Ascending aorta (tissue), 2 donors: ENCODE measurements at regions of chr1 and their contacts with region 1.

Region 1: GRCh38 chr1:32266921-32267591 is 16.0 kb downstream of the LCK start:
- DNase-seq: no peak
- H3K4me3 ChIP-seq: no peak overlapping the region
- H3K27ac ChIP-seq: no peak overlapping the region
- H3K4me1 ChIP-seq: peaks cover 0 to 2% of the 10 kb centered on the region in 2 donors
- H3K27me3 ChIP-seq: no peaks in the 10 kb centered on the region
- CTCF ChIP-seq: no peak

Region 2: DNA sequence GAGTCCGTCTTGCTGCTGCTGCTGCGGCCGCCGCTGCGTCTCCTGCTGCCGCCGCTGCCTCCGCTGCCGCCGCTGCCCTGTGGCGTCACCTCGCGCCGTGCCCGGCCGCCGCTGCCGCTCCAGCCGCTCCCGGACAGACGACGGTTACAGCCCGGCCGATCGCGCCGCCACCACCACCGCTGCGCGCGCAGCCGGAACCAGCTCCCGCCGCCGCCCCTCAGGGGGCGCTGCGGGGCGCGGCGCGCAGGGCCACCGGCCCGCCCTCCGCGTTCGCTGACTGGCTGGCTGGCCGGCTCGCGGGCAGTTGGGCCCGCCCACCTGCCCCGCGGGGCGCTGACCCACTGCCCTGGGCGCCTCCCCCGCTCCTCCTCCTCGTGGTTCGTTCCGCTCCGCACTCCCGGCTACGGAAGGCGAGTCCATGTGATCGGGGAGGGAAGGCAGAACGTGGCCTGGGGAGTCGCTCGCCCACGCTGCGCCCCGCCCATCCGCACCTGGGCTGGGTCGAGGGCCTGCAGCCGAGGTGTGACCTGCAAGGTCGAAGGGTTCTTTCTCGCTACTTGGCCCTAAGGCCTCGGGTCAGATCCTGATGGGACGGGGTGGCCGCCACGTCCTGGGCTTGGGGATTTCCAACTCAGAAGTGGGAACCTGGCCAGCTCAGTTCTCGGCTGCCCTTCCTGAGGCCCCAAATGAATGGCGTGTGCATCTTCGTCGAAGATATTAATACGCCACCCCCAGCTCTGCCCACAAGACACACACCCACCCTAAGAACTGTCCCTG is 328.7 kb before region 1 on chr1 and contains the start of gene PTP4A2:
- intact Hi-C with region 1: no loop called
- DNase-seq: peak; percentile 77 to 95
- H3K4me3 ChIP-seq: peak within 1 kb of the TSS; percentile 70 to 85
- H3K27ac ChIP-seq: peak within 1 kb of the TSS; percentile 94 to 97
- H3K4me1 ChIP-seq: peaks cover 12 to 26% of the 10 kb centered on the region in 2 donors
- H3K27me3 ChIP-seq: no peaks in the 10 kb centered on the region
- CTCF ChIP-seq: peak in 1 of 3 experiments; percentile 98
- total RNA-seq, gene PTP4A2: 174 TPM

Region 3: GRCh38 chr1:32221980-32222755 is 44.9 kb before region 1 on chr1 and contains the starts of genes EIF3I and TMEM234:
- intact Hi-C with region 1: loop called (anchors 1 kb)
- DNase-seq: peak; percentile 80 to 97
- H3K4me3 ChIP-seq: peak within 1 kb of the TSS; percentile 87 to 97
- H3K27ac ChIP-seq: peak within 1 kb of the TSS; percentile 81 to 97
- H3K4me1 ChIP-seq: peaks cover 19% of the 10 kb centered on the region in 2 donors
- H3K27me3 ChIP-seq: no peaks in the 10 kb centered on the region
- CTCF ChIP-seq: no peak
- total RNA-seq, gene EIF3I: 234 TPM
- total RNA-seq, gene TMEM234: 4.0 TPM

Region 4: GRCh38 chr1:32234792-32235191 is 32.3 kb before region 1 on chr1:
- intact Hi-C with region 1: no loop called
- DNase-seq: no peak
- H3K4me3 ChIP-seq: no peak overlapping the region
- H3K27ac ChIP-seq: no peak overlapping the region
- H3K4me1 ChIP-seq: no peaks in the 10 kb centered on the region
- H3K27me3 ChIP-seq: no peaks in the 10 kb centered on the region
- CTCF ChIP-seq: no peak

Region 5: GRCh38 chr1:32307323-32307722 is 40.3 kb after region 1 on chr1:
- intact Hi-C with region 1: no loop called
- DNase-seq: no peak
- H3K4me3 ChIP-seq: no peak overlapping the region
- H3K27ac ChIP-seq: no peak overlapping the region
- H3K4me1 ChIP-seq: no peaks in the 10 kb centered on the region
- H3K27me3 ChIP-seq: no peaks in the 10 kb centered on the region
- CTCF ChIP-seq: no peak